ENCODE measurements at regions of chr17 and their contacts with region 1.

Region 1: DNA sequence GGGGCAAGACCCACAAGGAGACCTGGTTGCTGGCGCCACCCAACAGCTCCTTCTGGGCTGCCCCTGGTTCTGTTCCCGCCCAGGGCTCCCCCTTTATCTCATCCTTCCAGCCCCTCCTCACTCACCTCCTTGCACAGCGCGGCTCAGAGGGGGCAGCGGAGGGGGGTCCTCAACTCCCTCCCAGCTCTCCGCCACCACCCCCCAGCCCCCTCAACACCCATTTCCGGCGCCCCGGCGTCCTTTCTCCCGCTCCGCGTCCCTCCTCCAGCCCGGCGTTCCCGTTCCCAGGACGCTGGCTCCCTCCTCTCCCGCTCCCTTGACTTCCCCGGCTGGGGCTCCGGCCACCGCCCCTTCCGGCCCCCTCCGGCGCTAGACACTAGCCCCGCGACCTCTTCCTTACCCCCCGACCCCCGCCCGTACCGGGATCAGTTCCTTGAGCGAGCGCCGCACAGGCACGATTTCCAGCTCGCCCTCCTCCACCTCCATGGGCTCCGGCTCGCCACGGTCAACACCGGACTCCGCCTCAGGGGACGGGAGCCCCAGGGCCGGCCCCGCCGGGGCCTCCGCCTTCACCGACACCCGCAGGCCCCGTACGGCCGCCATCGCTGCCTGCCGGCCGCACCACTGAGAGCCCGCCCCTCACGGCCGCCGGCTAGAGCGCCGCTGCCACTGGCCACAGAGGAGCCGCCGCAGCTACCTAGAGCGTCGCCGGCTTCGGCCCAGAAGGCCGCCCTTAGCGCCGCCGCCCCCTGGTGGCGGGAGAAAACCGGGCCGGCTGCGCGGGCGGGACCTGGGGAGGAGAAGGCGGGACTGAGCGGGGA is at the start of gene NCBP3:
- DNase-seq: peak; percentile 92
- H3K4me3 Mint-ChIP-seq: peak within 1 kb of the TSS; percentile 95
- H3K27ac Mint-ChIP-seq: peak within 1 kb of the TSS; percentile 88
- H3K4me1 Mint-ChIP-seq: peaks cover 25% of the 10 kb centered on the region
- H3K27me3 Mint-ChIP-seq: peaks cover 9% of the 10 kb centered on the region
- total RNA-seq, gene NCBP3: 42.8 to 43.9 TPM

Region 2: GRCh38 chr17:3710951-3711383 is 134.9 kb before region 1 on chr17:
- CTCF ChIA-PET with region 1: interaction called, 12 read pairs
- POLR2A ChIA-PET with region 1: no interaction called
- DNase-seq: peak; percentile 82
- H3K4me3 Mint-ChIP-seq: peak overlapping the region; percentile 68
- H3K27ac Mint-ChIP-seq: peak overlapping the region; percentile 97
- H3K4me1 Mint-ChIP-seq: peaks cover 59% of the 10 kb centered on the region
- H3K27me3 Mint-ChIP-seq: no peaks in the 10 kb centered on the region

Region 3: DNA sequence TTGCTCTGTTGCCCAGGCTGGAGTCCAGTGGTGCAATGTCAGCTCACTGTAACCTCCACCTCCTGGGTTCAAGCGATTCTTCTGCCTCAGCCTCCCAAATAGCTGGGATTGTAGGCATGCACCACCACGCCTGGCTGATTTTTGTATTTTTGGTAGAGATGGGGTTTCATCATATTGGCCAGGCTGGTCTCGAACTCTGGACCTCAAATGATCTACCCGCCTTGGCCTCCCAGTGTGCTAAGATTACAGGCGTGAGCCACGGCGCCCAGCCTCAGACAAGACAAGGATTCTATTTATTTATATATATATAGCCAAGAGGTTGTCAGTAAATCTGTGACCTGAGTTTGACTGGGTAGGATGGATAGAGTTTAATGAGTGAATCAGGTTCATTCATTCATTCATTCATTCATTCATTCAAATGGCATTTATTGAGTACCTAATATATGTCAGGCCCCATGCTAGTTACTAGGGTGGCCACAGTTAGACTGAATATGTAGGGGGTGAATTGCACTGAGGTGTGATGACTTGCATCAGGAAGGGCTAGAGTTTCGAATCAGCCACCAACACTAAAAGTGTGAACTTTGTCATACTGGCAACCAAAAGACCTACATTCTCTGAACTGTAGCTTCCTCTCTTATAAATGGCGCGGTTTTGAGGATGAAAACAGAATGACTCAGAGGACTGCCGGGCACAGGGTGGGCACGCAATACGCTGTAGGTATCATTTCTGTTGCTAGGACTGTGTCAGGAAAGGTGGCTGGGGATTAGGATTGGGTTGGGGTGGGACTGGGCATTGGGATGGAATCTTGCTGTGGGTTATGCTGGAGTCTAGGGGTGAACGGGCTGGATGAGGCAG is 82.7 kb before region 1 on chr17:
- CTCF ChIA-PET with region 1: interaction called, 12 read pairs
- POLR2A ChIA-PET with region 1: interaction called, 3 read pairs
- DNase-seq: peak; percentile 68
- H3K4me3 Mint-ChIP-seq: peak overlapping the region; percentile 75
- H3K27ac Mint-ChIP-seq: peak overlapping the region; percentile 97
- H3K4me1 Mint-ChIP-seq: peaks cover 64% of the 10 kb centered on the region
- H3K27me3 Mint-ChIP-seq: no peaks in the 10 kb centered on the region

Region 4: GRCh38 chr17:3827124-3827773 is 18.6 kb before region 1 on chr17:
- CTCF ChIA-PET with region 1: interaction called, 63 read pairs
- POLR2A ChIA-PET with region 1: interaction called, 4 read pairs
- DNase-seq: peak; percentile 76
- H3K4me3 Mint-ChIP-seq: no peak overlapping the region
- H3K27ac Mint-ChIP-seq: peak overlapping the region; percentile 36
- H3K4me1 Mint-ChIP-seq: peaks cover 9% of the 10 kb centered on the region
- H3K27me3 Mint-ChIP-seq: no peaks in the 10 kb centered on the region

Region 5: DNA sequence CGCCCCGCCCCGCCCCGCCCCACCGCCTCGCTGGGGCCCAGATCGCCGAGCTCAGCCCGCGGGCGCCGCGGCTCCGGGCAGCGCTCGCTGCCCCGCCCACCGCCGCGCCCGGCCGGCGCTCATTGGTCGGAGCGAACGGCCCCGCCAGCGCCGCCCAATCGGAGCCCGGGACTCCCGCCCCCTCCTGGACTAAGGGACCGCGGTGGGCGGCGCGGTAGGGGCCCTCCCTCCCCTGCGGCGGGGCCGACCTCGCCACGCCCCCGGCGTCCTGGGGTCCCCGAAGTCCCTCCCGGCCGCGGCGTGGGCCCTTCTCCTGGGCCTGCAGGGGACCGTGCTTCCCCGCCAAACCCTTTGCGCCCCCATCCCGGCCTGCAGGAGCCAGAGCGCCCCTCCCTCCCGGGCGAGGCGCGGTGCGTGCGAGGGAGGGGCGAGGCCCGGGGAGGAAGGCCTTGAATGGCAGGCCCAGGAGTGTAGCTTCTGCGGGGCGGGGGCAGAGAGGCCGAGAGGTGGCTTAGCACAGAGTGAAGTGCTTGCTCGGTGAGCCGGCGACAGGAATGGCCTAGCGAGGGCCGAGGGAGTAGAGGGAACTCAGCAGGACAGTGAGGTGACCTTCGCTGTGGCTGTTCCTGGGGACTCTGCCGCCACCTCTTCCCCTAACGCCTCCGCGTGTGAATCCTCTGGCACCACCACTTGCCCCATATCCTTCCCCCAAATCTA is 47.3 kb after region 1 on chr17 and contains the start of gene CAMKK1:
- CTCF ChIA-PET with region 1: interaction called, 14 read pairs
- POLR2A ChIA-PET with region 1: interaction called, 6 read pairs
- DNase-seq: peak; percentile 92
- H3K4me3 Mint-ChIP-seq: peak within 1 kb of the TSS; percentile 74
- H3K27ac Mint-ChIP-seq: peak within 1 kb of the TSS; percentile 72
- H3K4me1 Mint-ChIP-seq: peaks cover 20% of the 10 kb centered on the region
- H3K27me3 Mint-ChIP-seq: peaks cover 8% of the 10 kb centered on the region
- total RNA-seq, gene CAMKK1: 1.4 to 1.8 TPM

Region 6: DNA sequence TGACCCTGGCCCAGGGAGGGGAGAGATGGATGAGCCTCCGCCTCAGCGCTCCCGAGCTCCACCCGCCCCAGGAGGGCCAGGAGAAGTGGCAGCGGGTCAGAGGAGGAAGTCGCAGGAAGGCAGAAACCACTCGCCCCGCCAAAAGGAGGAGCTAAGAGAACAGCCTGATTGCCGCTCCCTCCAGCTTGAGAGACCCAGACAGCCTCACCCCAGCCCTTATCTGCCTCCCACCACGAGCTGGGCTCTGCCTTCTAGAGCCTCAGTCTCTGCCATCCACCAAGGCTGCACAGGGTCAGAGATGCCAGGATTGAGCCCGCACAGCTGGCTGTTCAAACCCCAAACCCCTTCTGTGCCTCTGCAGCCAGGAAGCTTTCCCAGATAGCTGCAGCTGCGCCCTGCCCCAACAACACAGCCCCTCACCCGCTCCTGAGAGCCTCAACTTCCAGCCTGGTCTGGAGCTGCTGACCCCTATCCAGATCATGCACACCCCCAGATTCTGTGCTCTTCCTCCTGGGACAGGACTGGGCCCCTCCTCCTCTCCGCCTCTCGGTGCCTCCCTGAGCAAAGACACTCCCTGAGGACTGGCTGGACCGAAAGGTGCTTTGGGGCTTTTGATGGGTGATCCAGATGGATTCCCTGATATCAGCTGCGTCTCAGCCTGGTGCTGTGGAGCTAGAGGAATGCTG is 119.4 kb after region 1 on chr17:
- CTCF ChIA-PET with region 1: interaction called, 10 read pairs
- POLR2A ChIA-PET with region 1: no interaction called
- DNase-seq: peak; percentile 85
- H3K4me3 Mint-ChIP-seq: peak overlapping the region; percentile 86
- H3K27ac Mint-ChIP-seq: peak overlapping the region; percentile 95
- H3K4me1 Mint-ChIP-seq: peaks cover 48% of the 10 kb centered on the region
- H3K27me3 Mint-ChIP-seq: peaks cover 3% of the 10 kb centered on the region

Measured in activated CD4-positive, alpha-beta memory T cell treated with anti-CD3 and anti-CD28 coated beads, Interleukin-2, amount 10 ng/mL, durations not matched to agents 7 days and 5 days (primary cell).